Activated T-helper 1 cell treated with anti-CD3 and anti-CD28 coated beads, Interleukin-12 subunit alpha, Interleukin-12 subunit beta, Interleukin-2, Interleukin-4 antibody, amounts not matched to agents 30 ng/mL and 10 ng/mL and 1 ng/mL, durations not matched to agents 14 hours and 24 hours and 36 hours (primary cell): ENCODE measurements at regions of chr5 and their contacts with region 1.

Region 1: DNA sequence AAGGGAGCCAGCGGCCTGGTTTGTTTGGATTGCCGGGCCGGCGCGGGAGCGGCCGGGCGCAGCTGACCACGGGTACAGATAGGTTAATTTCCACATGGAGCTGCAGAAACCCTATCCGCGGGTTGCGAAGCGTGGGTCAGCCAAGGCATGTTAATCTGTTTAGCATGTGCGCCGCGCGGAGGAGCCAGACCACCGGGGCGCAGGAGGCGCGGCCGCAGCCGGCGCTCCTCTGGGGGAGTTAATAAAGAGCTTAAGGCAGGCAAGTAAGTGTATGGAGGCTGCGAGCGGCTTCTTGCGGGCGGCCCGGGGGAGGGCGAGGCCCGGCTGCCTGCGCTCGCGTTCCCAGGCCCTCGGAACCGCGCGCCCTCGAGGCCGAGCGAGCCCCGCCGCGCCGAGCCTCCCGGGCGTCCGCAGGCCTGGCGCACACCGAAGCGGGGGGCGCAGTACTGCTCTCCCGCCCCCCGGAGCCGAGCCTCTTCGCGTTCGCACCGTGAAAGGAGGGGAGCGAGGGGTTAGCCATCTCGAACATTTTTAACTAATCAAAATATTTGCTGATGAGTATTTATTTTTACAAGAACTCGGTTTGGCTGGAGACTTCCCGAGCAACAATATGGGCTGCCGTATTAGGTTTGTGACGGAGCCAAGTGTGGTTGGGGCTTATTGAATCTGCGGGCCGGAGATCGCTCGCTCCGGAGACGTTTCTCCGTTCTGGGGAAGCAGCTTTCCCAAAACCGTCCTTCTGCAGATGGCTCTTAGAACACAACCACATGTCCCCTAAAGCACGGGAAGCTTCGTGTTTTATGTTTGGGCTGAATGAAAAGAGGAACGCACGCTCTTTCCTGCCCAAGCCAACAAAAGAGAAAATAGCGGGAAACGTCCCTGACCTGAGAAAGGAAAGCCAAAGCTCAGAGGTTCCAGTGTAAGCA is 28.8 kb downstream of the FOXD1 start:
- DNase-seq: no peak
- H3K4me3 Mint-ChIP-seq: no peak overlapping the region
- H3K27ac Mint-ChIP-seq: no peak overlapping the region
- H3K4me1 Mint-ChIP-seq: no peaks in the 10 kb centered on the region
- H3K27me3 Mint-ChIP-seq: peaks cover 88% of the 10 kb centered on the region

Region 2: DNA sequence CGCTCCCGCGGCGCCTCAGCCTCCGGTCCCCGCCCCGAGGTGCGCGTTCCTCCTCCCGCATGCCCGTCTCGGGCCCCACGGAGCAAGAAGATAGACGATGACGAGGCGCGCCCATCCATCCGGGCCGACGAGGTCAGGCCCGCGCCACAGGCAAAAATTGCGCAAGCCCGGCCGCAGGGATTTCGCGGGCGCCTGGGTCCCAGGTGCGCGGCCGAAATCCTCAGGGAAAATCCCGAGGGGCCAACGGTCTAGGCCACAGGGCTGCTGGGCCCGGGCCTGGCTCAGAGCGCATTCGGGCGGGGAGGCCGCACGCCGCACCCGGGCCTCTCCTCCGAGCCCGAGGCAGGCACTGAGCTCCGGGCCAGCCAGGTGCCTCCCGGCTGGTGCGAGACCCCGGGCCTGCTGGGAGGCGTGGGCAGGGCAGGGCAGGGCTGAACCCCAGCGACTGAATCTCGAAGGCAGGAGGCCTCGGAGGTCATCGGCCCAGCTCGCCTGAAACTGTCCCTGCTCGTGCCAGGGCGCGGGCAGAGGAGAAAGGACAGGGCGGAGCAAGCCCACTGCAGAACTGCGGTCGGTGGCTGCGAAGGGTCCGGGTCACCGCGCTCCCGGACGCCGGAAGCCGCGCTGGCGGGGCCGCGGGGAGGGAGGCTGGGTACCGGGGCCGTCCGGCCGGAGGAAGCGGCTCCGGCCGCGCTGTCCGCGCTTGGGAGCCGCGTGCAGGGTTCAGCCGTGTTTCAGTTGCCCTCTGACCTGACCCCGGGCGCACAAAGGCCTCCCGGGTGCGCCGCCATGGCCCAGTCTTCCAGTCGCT is 37.9 kb before region 1 on chr5:
- intact Hi-C with region 1: loop called (anchors 5 kb)
- DNase-seq: no peak
- H3K4me3 Mint-ChIP-seq: no peak overlapping the region
- H3K27ac Mint-ChIP-seq: no peak overlapping the region
- H3K4me1 Mint-ChIP-seq: peaks cover 6% of the 10 kb centered on the region
- H3K27me3 Mint-ChIP-seq: peaks cover 66% of the 10 kb centered on the region

Region 3: GRCh38 chr5:73437101-73437776 is 17.5 kb after region 1 on chr5:
- intact Hi-C with region 1: loop called (anchors 2 kb)
- DNase-seq: no peak
- H3K4me3 Mint-ChIP-seq: no peak overlapping the region
- H3K27ac Mint-ChIP-seq: no peak overlapping the region
- H3K4me1 Mint-ChIP-seq: peaks cover 6% of the 10 kb centered on the region
- H3K27me3 Mint-ChIP-seq: peaks cover 83% of the 10 kb centered on the region